ENCODE measurements at regions of chr1 and their contacts with region 1.

Region 1: GRCh38 chr1:206982216-206982615 is 12.0 kb upstream of the FCAMR start:
- DNase-seq: peak; percentile 57 to 73
- ATAC-seq: peak; percentile 96 to 97
- H3K4me3 ChIP-seq: no peak overlapping the region
- H3K27ac ChIP-seq: no peak overlapping the region
- H3K4me1 ChIP-seq: no peaks in the 10 kb centered on the region; the same call in 2 of the 3 replicates
- CTCF ChIP-seq: peak; percentile 92
- EP300 ChIP-seq: no peak
- POLR2A ChIP-seq: no peak
- RAD21 ChIP-seq: peak; percentile 92

Region 2: GRCh38 chr1:206469933-206470691 is 512.1 kb before region 1 on chr1 and contains the start of gene IKBKE:
- CTCF ChIA-PET with region 1: interaction called, 10 read pairs
- POLR2A ChIA-PET with region 1: no interaction called
- DNase-seq: peak; percentile 67 to 96
- ATAC-seq: peak; percentile 79 to 93
- H3K4me3 ChIP-seq: peak within 1 kb of the TSS; percentile 63
- H3K27ac ChIP-seq: peak within 1 kb of the TSS; percentile 76 to 93
- H3K4me1 ChIP-seq: peaks cover 21% of the 10 kb centered on the region
- CTCF ChIP-seq: no peak
- EP300 ChIP-seq: no peak
- POLR2A ChIP-seq: peak; percentile 61
- RAD21 ChIP-seq: no peak
- polyA plus RNA-seq, gene IKBKE: 6.3 and 6.4 TPM in 2 replicates

Region 3: GRCh38 chr1:206612129-206612876 is 369.9 kb before region 1 on chr1 and contains the start of gene EIF2D:
- CTCF ChIA-PET with region 1: interaction called, 45 read pairs
- POLR2A ChIA-PET with region 1: no interaction called
- DNase-seq: peak; percentile 95 to 99
- ATAC-seq: peak; percentile 95 to 98
- H3K4me3 ChIP-seq: peak within 1 kb of the TSS; percentile 62
- H3K27ac ChIP-seq: peak within 1 kb of the TSS; percentile 78 to 88
- H3K4me1 ChIP-seq: peaks cover 6% of the 10 kb centered on the region
- CTCF ChIP-seq: peak; percentile 78
- EP300 ChIP-seq: peak in 1 of 2 experiments; percentile 21; a peak in 1 of 5 replicates
- POLR2A ChIP-seq: peak; percentile 87
- RAD21 ChIP-seq: peak in 1 of 2 experiments; percentile 42; a peak in 3 of 5 replicates
- polyA plus RNA-seq, gene EIF2D: 63.2 and 72.6 TPM in 2 replicates

Region 4: DNA sequence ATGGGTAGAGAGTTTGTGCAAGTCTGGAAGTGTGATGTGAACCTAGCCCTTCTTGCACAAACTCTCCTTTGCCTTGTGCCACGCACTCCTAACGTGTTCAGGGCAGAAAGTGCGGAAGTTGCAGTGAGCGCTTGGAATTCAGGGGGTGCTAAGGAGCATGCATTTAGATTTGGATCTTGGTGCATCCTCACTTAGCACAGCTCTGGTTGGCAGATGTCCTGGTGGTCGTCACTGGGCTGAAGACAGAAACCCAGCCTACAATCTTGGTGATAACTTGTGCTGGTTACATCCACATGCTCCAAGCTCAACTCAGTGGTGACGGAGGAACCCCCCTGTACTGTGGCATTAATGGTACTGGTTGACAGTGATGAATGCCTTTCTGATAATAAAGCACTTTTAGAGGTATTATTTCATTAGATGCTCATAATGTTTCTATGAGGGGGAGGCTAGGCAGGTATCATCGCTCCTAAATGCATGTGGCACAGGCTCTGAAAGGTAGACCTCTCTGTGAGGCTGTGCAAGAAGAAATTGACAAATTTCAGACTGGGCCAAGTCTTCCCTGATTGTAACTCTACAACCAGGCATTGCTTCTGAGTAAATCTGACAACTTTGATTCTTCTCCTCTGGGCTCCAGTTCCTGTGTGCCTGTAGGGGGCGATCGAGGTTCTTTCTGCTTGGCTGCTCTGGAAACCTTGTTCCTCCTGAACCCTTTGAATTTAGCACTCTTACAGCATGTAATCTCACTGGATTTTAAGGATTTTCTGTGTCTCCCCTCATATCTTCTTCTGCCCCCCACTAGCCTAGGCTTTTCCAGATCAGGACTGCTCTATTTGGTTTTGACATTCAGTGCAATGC is 256.9 kb before region 1 on chr1:
- CTCF ChIA-PET with region 1: interaction called, 30 read pairs
- POLR2A ChIA-PET with region 1: no interaction called
- DNase-seq: peak; percentile 57
- ATAC-seq: peak in 1 of 2 experiments; percentile 44; a peak in 3 of 6 replicates
- H3K4me3 ChIP-seq: no peak overlapping the region
- H3K27ac ChIP-seq: peak overlapping the region; percentile 90 to 92
- H3K4me1 ChIP-seq: peaks cover 62% of the 10 kb centered on the region
- CTCF ChIP-seq: peak; percentile 46; the same call in 2 of the 3 replicates
- EP300 ChIP-seq: no peak
- POLR2A ChIP-seq: no peak
- RAD21 ChIP-seq: peak in 1 of 2 experiments; percentile 36; a peak in 2 of 5 replicates

Region 5: DNA sequence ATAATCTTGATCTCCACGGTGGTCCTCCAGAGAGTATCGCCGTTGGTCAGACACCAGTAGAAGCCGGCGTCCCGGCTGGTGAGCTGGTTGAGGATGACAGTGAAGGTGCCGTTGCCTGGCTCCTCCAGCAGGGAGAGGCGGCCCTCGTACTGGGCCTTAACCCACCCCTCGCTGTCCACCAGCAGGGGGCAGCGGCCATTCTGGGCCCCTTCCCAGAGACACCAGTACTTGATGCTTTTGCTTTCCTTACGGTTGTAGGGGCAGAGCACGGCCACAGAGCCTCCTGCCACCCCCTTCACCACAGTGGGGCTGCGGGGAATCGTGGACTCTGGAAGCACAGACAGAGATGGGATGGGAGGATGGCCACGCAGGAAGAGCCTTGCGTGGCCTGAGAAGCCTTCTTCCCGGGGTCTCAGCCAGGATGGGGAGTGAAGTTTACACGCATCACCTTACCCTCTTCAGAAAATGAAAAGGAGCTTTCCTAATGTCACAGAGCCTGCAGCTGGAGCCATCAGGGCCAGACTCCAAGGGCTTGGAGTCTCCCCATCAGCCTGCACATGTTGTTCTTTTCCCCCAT is 46.6 kb before region 1 on chr1:
- CTCF ChIA-PET with region 1: interaction called, 63 read pairs
- POLR2A ChIA-PET with region 1: no interaction called
- DNase-seq: peak; percentile 56 to 68
- ATAC-seq: peak; percentile 87 to 97
- H3K4me3 ChIP-seq: no peak overlapping the region
- H3K27ac ChIP-seq: no peak overlapping the region
- H3K4me1 ChIP-seq: no peaks in the 10 kb centered on the region
- CTCF ChIP-seq: peak; percentile 40
- EP300 ChIP-seq: no peak
- POLR2A ChIP-seq: no peak
- RAD21 ChIP-seq: peak; percentile 41 to 63; a peak in 4 of 5 replicates

Region 6: DNA sequence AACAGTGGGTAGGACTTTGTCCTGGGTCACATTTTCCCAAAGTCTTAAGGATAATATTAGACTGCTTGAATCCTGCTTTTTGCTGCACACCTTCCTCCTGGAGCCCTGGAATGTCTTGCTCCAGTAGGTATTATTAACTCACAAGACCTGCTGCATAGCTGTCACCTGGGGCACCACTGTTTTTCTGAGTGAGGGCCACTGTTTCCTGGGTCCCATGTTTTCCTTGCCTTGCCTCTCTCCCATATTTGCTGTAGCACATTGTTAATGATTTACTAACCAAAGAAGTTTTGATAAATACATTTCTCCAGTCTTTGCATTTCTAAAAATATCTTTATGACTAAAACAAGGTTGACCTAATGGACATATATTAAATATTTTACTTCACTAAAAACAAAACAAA is 10.6 kb after region 1 on chr1:
- CTCF ChIA-PET with region 1: interaction called, 31 read pairs
- POLR2A ChIA-PET with region 1: no interaction called
- DNase-seq: no peak
- ATAC-seq: no peak; a peak in 1 of 6 replicates
- H3K4me3 ChIP-seq: no peak overlapping the region
- H3K27ac ChIP-seq: 0 out of 6 replicates have a peak overlapping the region, but pooled peaks of 1 of the 2 experiments have one; percentile 33
- H3K4me1 ChIP-seq: peaks cover 9% of the 10 kb centered on the region; the same call in 2 of the 3 replicates
- CTCF ChIP-seq: no peak
- EP300 ChIP-seq: no peak
- POLR2A ChIP-seq: no peak
- RAD21 ChIP-seq: no peak

Region 7: GRCh38 chr1:207077470-207078377 is 95.5 kb after region 1 on chr1:
- CTCF ChIA-PET with region 1: interaction called, 15 read pairs
- POLR2A ChIA-PET with region 1: no interaction called
- DNase-seq: peak; percentile 62 to 78
- ATAC-seq: peak; percentile 67 to 93; a peak in 5 of 6 replicates
- H3K4me3 ChIP-seq: no peak overlapping the region
- H3K27ac ChIP-seq: peak overlapping the region; percentile 12 to 29; a peak in 1 of 6 replicates
- H3K4me1 ChIP-seq: peaks cover 28% of the 10 kb centered on the region
- CTCF ChIP-seq: peak; percentile 96
- EP300 ChIP-seq: no peak
- POLR2A ChIP-seq: no peak
- RAD21 ChIP-seq: peak; percentile 90 to 98